RWPE1 (cell line): ENCODE measurements at regions of chr2 and their contacts with region 1.

Region 1: DNA sequence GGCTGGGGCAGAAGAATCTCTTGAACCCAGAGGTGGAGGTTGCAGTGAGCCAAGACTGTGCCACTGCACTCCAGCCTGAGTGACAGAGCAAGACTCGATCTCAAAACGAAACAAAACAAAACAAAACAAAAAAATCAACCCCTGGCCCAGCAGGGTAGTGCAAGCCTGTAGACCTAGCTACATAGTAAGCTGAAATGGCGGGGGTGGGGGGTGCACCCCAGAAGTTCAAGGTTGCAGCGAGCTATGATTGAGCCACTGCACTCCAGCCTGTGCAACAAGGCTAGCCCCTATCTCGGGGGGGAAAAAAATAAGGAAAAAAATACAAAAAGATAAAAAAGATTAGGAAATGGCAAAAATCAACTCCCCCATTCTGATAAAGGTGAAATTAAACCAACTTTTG is 6.4 kb downstream of the ATL2 start:
- DNase-seq: no peak
- H3K27ac ChIP-seq: no peak overlapping the region
- CTCF ChIP-seq: no peak

Region 2: DNA sequence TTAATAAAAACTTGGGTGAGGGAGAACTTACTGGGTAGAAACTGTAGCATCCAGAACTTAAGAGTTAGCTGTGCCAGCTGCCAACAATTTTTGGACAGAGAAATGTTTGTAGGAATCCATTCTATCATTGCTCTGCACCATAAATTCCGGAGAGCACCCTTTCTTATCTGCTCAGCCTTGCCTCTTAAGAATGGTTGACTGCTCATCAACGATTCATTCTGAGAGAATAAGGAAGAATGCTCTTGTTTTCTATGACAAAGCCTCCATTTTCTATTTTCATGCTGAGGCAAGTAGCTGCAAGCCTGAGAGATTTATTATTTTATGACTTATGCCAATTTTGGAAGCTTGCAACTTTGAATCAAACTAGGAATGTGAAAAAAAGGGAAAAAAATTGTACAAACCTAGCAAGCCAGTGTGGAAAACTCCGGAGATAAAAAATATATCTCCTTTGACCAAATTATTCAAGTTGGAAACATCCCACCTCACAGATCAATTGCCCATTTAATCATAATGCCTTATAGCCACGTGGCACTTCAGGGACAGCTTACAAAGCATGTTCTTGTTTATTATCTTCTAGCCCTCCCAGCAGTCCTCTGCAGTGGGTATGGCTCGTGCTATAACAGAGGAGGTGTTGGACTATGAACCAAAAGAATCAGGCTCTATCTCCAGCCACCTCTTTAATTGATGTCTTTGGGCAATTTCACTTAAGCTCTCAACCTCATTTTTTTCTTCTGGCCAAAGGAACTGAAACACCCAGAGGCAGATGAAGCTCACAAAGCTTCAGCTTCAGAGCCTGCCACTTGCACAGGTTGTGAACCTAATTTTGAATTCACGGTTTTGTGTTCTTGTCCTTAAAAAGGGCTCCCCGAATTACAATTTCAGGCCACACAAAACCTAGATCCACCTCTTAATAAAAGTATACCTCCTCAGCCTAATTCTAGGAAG is 47.4 kb after region 1 on chr2:
- CTCF ChIA-PET with region 1: no interaction called
- POLR2A ChIA-PET with region 1: no interaction called
- DNase-seq: peak; percentile 75
- H3K27ac ChIP-seq: no peak overlapping the region
- CTCF ChIP-seq: no peak

Region 3: GRCh38 chr2:38581193-38582147 is 210.8 kb after region 1 on chr2:
- CTCF ChIA-PET with region 1: interaction called, 12 read pairs
- POLR2A ChIA-PET with region 1: no interaction called
- DNase-seq: no peak
- H3K27ac ChIP-seq: no peak overlapping the region
- CTCF ChIP-seq: peak; percentile 71